Activated naive CD4-positive, alpha-beta T cell treated with anti-CD3 and anti-CD28 coated beads for 36 hours (primary cell): ENCODE measurements at regions of chrX and their contacts with region 1.

Region 1: DNA sequence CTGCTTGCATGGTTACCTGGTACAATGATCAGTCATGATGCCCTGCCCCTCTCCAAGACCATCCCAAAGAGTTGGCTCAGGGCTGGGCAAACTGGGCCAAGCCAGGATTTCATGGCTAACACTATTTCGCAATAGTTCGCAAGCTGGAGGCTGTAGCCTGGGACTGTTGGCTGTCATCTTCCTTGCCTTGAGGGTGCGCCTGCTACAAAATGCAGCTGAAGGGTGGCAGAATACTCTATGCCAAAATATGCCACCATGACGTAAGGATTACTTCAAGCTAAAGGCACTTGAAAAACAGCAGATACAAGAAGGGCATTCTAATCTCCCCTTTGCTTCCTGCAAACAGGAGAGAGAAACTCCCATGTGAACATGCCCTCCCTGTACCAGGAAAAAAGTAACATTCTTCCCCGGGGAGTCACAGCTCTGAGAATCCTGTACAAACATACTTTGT is 21.0 kb downstream of the SAT1 start:
- DNase-seq: no peak
- H3K4me3 Mint-ChIP-seq: no peak overlapping the region
- H3K27ac Mint-ChIP-seq: no peak overlapping the region
- H3K4me1 Mint-ChIP-seq: peaks cover 5% of the 10 kb centered on the region
- H3K27me3 Mint-ChIP-seq: no peaks in the 10 kb centered on the region

Region 2: GRCh38 chrX:23883737-23884354 is 79.9 kb after region 1 on chrX:
- CTCF ChIA-PET with region 1: no interaction called
- intact Hi-C with region 1: loop called (anchors 5 kb)
- DNase-seq: peak; percentile 11
- H3K4me3 Mint-ChIP-seq: no peak overlapping the region
- H3K27ac Mint-ChIP-seq: no peak overlapping the region
- H3K4me1 Mint-ChIP-seq: peaks cover 12% of the 10 kb centered on the region
- H3K27me3 Mint-ChIP-seq: no peaks in the 10 kb centered on the region